Mammary epithelial cell (primary cell): ENCODE measurements at regions of chr10 and their contacts with region 1.

Region 1: GRCh38 chr10:123229927-123230632 is 75.9 kb downstream of the BUB3 start:
- DNase-seq: peak; percentile 82
- H3K4me3 ChIP-seq: no peak overlapping the region
- H3K27ac ChIP-seq: no peak overlapping the region
- H3K4me1 ChIP-seq: peaks cover 10% of the 10 kb centered on the region
- H3K27me3 ChIP-seq: no peaks in the 10 kb centered on the region
- CTCF ChIP-seq: no peak

Region 2: GRCh38 chr10:123203393-123204134 is 26.5 kb before region 1 on chr10:
- CTCF ChIA-PET with region 1: no interaction called
- dilution Hi-C with region 1: no loop called
- in situ Hi-C with region 1: no loop called
- intact Hi-C with region 1: loop called (anchors 5 kb)
- DNase-seq: no peak
- H3K4me3 ChIP-seq: no peak overlapping the region
- H3K27ac ChIP-seq: no peak overlapping the region
- H3K4me1 ChIP-seq: no peaks in the 10 kb centered on the region
- H3K27me3 ChIP-seq: peaks cover 2% of the 10 kb centered on the region
- CTCF ChIP-seq: no peak